ENCODE measurements at regions of chr5 and their contacts with region 1.

Region 1: GRCh38 chr5:149828161-149828884 is 98.2 kb downstream of the PPARGC1B start:
- DNase-seq: peak; percentile 89
- H3K4me3 ChIP-seq: no peak overlapping the region
- H3K27ac ChIP-seq: no peak overlapping the region
- H3K4me1 ChIP-seq: no peaks in the 10 kb centered on the region
- H3K27me3 ChIP-seq: no peaks in the 10 kb centered on the region
- CTCF ChIP-seq: peak; percentile 83 to 92
- POLR2A ChIP-seq: no peak

Region 2: DNA sequence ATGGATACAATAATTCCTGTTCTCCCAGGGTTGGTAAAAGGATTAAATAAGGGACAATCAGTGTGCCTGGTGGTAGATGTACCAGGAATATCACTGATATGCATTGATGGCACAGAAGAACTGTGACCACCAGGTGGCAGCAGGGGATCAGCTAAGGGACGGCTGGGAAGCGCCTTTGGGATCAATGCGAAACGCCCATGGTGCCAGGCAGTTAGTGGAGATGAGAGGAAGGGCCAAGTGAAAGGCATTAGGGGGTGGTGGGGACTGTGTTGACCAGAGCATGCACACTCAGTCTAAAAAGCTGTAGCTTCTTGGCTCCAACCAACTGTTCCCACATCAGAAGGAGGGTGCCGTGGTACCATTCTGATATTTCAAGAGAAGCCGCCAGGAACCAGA is 191.5 kb before region 1 on chr5:
- CTCF ChIA-PET with region 1: interaction called, 278 read pairs
- POLR2A ChIA-PET with region 1: no interaction called
- dilution Hi-C with region 1: loop called (anchors 10 kb)
- intact Hi-C with region 1: loop called (anchors 1 kb)
- DNase-seq: peak; percentile 57
- H3K4me3 ChIP-seq: no peak overlapping the region
- H3K27ac ChIP-seq: no peak overlapping the region
- H3K4me1 ChIP-seq: peaks cover 12% of the 10 kb centered on the region
- H3K27me3 ChIP-seq: no peaks in the 10 kb centered on the region
- CTCF ChIP-seq: peak; percentile 72 to 74
- POLR2A ChIP-seq: no peak

Region 3: GRCh38 chr5:149646564-149646963 is 181.8 kb before region 1 on chr5:
- CTCF ChIA-PET with region 1: interaction called, 20 read pairs
- POLR2A ChIA-PET with region 1: no interaction called
- dilution Hi-C with region 1: no loop called
- intact Hi-C with region 1: no loop called
- DNase-seq: no peak
- H3K4me3 ChIP-seq: no peak overlapping the region
- H3K27ac ChIP-seq: no peak overlapping the region
- H3K4me1 ChIP-seq: no peaks in the 10 kb centered on the region
- H3K27me3 ChIP-seq: peaks cover 4% of the 10 kb centered on the region in 2 experiments
- CTCF ChIP-seq: no peak
- POLR2A ChIP-seq: no peak

Region 4: DNA sequence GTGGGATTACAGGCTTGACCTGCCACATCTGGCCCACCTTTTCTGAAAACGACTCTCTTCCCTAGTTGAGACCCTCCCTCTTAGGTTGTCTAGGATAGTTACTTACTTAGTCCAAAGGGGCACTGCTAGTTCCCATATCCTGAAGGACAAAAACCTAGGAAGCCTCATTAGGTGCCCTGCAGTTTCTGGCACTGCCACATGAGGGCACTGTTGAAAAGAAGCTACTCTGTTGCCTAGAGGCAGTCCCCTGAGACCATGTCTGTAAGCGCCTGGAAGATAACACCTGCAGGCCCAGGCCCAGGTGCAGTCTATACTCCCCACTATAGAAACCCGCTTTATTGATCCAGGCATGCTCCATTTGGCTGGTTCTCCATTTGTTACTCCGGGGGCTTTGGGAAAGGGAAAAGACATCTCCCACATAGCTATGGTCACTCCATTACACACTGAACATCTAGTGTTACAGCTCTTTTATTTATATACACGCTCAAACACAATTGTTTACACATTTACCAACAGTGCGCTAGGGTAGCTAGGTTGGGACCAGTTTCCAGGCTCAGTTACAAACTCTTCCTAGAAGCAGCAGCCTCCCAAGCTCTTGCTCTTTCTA is 171.6 kb before region 1 on chr5:
- CTCF ChIA-PET with region 1: interaction called, 42 read pairs
- POLR2A ChIA-PET with region 1: no interaction called
- dilution Hi-C with region 1: no loop called
- intact Hi-C with region 1: loop called (anchors 1 kb)
- DNase-seq: no peak
- H3K4me3 ChIP-seq: no peak overlapping the region
- H3K27ac ChIP-seq: no peak overlapping the region
- H3K4me1 ChIP-seq: no peaks in the 10 kb centered on the region
- H3K27me3 ChIP-seq: peaks cover 3 to 10% of the 10 kb centered on the region in 2 experiments
- CTCF ChIP-seq: peak; percentile 45 to 52
- POLR2A ChIP-seq: no peak

Region 5: DNA sequence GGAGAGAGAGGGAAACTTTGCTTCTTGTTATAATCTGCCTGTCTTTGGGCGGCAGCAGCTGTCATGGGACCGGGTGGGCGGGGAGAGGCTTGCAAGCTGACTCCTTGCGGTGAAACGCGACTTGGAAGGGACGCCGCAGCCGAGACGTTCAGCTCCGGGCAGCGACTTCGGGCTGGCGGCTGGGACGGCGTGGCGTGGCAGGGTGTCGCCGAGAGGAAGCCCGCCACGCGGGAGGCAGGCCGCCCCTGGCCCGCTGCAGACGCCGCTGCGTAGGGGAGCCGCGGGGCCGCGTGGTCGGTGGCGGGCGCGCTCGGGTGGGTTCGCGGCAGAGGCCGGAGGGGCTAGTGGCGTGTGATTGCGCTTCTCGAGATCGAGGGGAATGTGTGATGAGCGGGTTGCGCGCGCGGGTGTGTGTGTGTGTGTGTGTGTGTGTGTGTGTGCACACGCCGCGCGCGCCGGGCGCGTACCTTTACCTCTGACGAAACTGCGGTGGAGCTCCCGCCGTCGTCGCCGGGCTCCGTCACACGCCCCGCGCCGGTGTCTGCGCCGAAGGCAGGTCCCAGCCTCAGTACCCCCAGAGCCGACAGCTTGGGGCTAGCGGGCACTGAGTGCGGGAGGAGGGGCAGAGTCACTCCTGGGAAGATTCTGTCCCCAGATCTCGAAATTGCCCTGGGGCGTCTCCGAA is 96.5 kb before region 1 on chr5:
- CTCF ChIA-PET with region 1: interaction called, 29 read pairs
- POLR2A ChIA-PET with region 1: no interaction called
- dilution Hi-C with region 1: no loop called
- intact Hi-C with region 1: loop called (anchors 1 kb)
- DNase-seq: peak; percentile 63
- H3K4me3 ChIP-seq: peak overlapping the region; percentile 2 to 83 (median 53)
- H3K27ac ChIP-seq: no peak overlapping the region
- H3K4me1 ChIP-seq: peaks cover 9% of the 10 kb centered on the region
- H3K27me3 ChIP-seq: no peaks in the 10 kb centered on the region
- CTCF ChIP-seq: no peak
- POLR2A ChIP-seq: no peak

Region 6: GRCh38 chr5:149749481-149750365 is 78.6 kb before region 1 on chr5:
- CTCF ChIA-PET with region 1: no interaction called
- POLR2A ChIA-PET with region 1: no interaction called
- dilution Hi-C with region 1: no loop called
- intact Hi-C with region 1: no loop called
- DNase-seq: no peak
- H3K4me3 ChIP-seq: no peak overlapping the region
- H3K27ac ChIP-seq: no peak overlapping the region
- H3K4me1 ChIP-seq: no peaks in the 10 kb centered on the region
- H3K27me3 ChIP-seq: no peaks in the 10 kb centered on the region
- CTCF ChIP-seq: no peak
- POLR2A ChIP-seq: no peak

Region 7: DNA sequence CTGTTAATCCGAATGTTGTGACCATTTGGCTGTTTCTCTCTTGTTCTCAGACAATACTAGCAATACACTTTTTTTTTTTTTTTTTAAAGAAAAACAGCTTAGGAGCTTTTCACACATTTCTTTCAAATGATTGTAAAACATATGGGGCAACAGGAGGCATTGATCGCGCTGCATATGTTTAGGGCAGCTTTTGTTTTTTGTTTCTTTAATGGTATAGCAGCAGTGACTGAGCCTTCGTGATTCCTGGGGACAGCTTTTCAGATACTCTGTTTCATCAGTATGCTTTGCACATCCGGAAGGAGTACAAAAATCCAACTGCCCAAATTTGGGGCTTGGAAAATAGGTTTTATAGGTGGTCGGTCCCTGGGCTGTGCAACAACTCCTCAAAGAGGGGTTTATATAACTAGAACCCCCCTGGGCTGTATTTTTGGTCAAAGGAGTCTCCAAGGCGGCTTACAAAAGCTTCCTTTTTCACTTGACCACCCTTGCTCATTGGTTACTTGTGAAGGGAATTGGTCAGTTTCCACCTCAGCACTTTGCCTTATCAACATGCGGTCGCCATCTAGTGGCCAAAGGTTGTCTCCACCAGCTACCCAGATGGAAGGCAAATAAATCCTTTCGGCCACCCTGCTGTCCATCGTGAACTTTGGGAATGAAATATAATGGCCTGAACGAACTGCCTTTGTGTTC is 24.5 kb after region 1 on chr5:
- CTCF ChIA-PET with region 1: interaction called, 295 read pairs
- POLR2A ChIA-PET with region 1: no interaction called
- dilution Hi-C with region 1: no loop called
- intact Hi-C with region 1: no loop called
- DNase-seq: peak; percentile 75
- H3K4me3 ChIP-seq: no peak overlapping the region
- H3K27ac ChIP-seq: no peak overlapping the region
- H3K4me1 ChIP-seq: peaks cover 7% of the 10 kb centered on the region
- H3K27me3 ChIP-seq: no peaks in the 10 kb centered on the region
- CTCF ChIP-seq: peak; percentile 89 to 98
- POLR2A ChIP-seq: no peak

Measured in endothelial cell of umbilical vein (primary cell).